Activated B cell treated with CpG ODN at 0.5 μM for 24 hours (primary cell): ENCODE measurements at regions of chr2 and their contacts with region 1.

Region 1: DNA sequence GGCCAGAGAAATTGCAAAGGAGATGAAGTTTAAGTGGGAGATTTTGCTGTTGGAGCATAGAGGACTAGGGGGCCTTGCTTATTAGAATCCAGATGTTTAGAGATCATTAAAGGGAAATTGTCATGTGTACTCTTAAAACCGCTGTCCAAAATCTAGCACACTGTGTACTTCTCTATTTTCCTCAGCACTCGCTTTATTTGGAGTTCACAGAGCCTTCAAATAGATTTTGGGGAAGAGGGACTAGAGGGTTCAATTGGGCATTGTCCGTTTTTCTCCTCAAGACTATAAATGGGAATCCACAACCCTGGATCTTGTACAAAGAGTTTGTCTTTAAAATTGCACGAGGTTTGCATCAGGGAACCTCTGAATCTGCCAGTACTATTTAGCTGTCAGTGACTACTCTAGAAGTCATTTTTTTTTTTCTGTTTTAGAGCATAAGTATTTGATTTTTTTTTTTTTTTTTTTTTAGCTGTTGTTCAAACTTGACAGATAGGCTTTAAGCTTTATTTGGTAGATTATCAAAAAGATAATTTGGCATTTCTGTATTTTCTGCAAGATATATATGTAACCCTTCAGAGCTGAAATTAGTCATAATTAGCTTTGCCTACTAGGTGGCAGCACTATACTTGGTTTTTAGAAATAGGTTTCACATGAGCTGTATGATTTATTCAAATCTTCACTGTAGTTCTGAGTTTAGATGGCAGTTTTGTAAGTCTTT is 14.2 kb downstream of the PMS1 start:
- DNase-seq: no peak
- ATAC-seq: peak; percentile 45
- H3K4me3 Mint-ChIP-seq: no peak overlapping the region
- H3K27ac Mint-ChIP-seq: no peak overlapping the region
- H3K4me1 Mint-ChIP-seq: peaks cover 5% of the 10 kb centered on the region
- H3K27me3 Mint-ChIP-seq: no peaks in the 10 kb centered on the region
- CTCF ChIP-seq: no peak

Region 2: GRCh38 chr2:189729430-189729829 is 69.0 kb before region 1 on chr2:
- CTCF ChIA-PET with region 1: no interaction called
- POLR2A ChIA-PET with region 1: no interaction called
- intact Hi-C with region 1: no loop called
- DNase-seq: no peak
- ATAC-seq: no peak
- H3K4me3 Mint-ChIP-seq: no peak overlapping the region
- H3K27ac Mint-ChIP-seq: no peak overlapping the region
- H3K4me1 Mint-ChIP-seq: no peaks in the 10 kb centered on the region
- H3K27me3 Mint-ChIP-seq: no peaks in the 10 kb centered on the region
- CTCF ChIP-seq: no peak

Region 3: DNA sequence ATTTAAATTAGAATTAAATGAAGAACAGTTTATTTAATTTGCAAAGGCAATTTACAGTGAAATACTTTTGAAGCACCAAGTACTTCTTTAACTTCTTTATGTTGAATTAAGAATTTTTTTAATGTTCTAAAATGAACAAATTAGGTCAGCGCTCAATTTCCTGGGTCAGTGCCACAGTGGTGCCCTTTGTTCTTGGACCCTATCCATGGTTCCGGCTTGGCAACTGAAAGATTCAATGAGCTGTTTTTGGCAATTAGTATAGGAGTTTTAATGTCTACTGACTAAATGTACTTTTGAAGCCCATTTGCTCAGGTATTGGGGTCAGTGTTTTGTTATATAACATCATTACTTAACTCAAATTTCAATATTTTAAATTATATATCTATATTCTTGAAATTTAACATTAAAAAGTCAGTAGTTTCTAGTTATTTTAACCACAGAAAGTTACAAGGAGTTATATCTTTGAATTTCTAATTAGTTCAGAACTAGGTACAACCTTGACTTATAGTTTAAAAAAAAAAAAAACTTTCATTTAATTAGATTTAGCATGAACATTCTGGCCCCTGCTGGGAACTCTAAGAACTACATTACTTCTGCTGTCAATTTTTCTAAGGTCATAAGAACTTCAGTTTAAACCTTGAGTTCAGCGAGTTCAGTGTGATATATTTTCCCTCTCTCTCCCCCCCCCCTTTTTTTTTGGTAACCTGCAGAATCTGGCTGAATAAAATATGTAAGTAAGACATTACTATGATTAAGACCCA is 271.6 kb after region 1 on chr2:
- CTCF ChIA-PET with region 1: interaction called, 15 read pairs
- POLR2A ChIA-PET with region 1: no interaction called
- intact Hi-C with region 1: loop called (anchors 1 kb)
- DNase-seq: no peak
- ATAC-seq: peak; percentile 61
- H3K4me3 Mint-ChIP-seq: no peak overlapping the region
- H3K27ac Mint-ChIP-seq: no peak overlapping the region
- H3K4me1 Mint-ChIP-seq: no peaks in the 10 kb centered on the region
- H3K27me3 Mint-ChIP-seq: no peaks in the 10 kb centered on the region
- CTCF ChIP-seq: no peak

Region 4: GRCh38 chr2:190277234-190278112 is 479.0 kb after region 1 on chr2:
- CTCF ChIA-PET with region 1: no interaction called
- POLR2A ChIA-PET with region 1: no interaction called
- intact Hi-C with region 1: loop called (anchors 2 kb)
- DNase-seq: no peak
- ATAC-seq: peak; percentile 31
- H3K4me3 Mint-ChIP-seq: no peak overlapping the region
- H3K27ac Mint-ChIP-seq: no peak overlapping the region
- H3K4me1 Mint-ChIP-seq: no peaks in the 10 kb centered on the region
- H3K27me3 Mint-ChIP-seq: no peaks in the 10 kb centered on the region
- CTCF ChIP-seq: no peak